Activated B cell treated with CpG ODN at 0.5 μM for 24 hours (primary cell): ENCODE measurements at regions of chr18 and their contacts with region 1.

Region 1: GRCh38 chr18:77061946-77062517 is 70.6 kb downstream of the MBP start:
- DNase-seq: no peak
- ATAC-seq: peak; percentile 30
- H3K4me3 Mint-ChIP-seq: peak overlapping the region; percentile 55
- H3K27ac Mint-ChIP-seq: peak overlapping the region; percentile 94
- H3K4me1 Mint-ChIP-seq: peaks cover 83% of the 10 kb centered on the region
- H3K27me3 Mint-ChIP-seq: no peaks in the 10 kb centered on the region
- CTCF ChIP-seq: no peak

Region 2: DNA sequence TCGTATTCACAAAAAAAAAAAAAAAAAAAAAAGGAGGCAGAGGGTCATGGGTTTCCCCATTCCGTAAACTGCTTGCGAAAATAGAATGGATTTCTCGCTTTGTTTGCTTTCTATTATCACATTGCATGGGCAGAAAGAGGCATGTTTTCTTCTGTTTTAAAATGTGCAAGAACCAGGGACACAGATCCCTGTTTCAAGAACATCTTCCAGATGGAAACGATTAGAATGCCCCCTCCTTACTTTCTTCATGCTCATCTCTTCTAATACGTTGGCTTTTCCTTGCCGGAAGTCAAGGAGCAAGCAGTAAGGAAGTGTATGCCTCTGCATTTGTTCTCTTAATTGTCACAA is 516.0 kb before region 1 on chr18:
- CTCF ChIA-PET with region 1: no interaction called
- POLR2A ChIA-PET with region 1: no interaction called
- intact Hi-C with region 1: no loop called
- DNase-seq: no peak
- ATAC-seq: no peak
- H3K4me3 Mint-ChIP-seq: no peak overlapping the region
- H3K27ac Mint-ChIP-seq: no peak overlapping the region
- H3K4me1 Mint-ChIP-seq: no peaks in the 10 kb centered on the region
- H3K27me3 Mint-ChIP-seq: peaks cover 10% of the 10 kb centered on the region
- CTCF ChIP-seq: no peak

Region 3: DNA sequence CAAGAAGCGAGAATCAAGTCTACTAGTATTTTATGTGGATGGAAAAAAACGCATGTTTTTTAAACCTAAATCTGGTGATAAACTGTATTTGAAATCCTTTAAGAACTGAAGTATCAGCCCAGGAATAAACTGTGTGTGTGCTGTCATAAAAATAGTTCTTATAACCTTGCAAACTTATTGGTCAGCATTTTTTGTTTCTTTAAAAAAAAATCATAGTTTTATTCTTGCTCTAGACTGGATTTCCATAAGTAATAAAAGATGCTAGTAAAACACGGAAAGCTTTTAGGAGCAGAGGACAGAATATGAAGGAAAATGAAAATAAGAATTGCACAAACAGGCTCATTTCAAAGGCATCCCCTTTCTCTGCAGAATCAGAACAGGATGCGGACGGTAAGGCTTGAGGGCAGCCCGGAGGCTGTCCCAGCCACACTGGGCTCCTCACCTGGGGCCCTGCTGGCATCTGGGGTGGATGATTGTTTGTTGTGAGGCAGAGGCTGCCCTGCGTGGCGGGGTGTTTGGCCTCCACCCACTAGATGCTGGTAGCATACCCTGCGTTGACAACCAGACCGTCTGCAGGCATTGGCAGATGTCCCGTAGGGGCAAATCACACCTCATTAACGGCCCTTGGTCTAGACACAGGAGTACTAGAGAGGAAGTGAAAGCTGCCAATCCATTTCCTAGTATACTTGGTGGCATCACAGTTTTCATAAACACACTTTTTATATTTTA is 18.1 kb after region 1 on chr18:
- CTCF ChIA-PET with region 1: no interaction called
- POLR2A ChIA-PET with region 1: interaction called, 13 read pairs
- intact Hi-C with region 1: loop called (anchors 1 kb)
- DNase-seq: peak; percentile 60
- ATAC-seq: peak; percentile 99
- H3K4me3 Mint-ChIP-seq: peak overlapping the region; percentile 45
- H3K27ac Mint-ChIP-seq: peak overlapping the region; percentile 84
- H3K4me1 Mint-ChIP-seq: peaks cover 52% of the 10 kb centered on the region
- H3K27me3 Mint-ChIP-seq: no peaks in the 10 kb centered on the region
- CTCF ChIP-seq: no peak